ENCODE measurements at regions of chr2 and their contacts with region 1.

Region 1: GRCh38 chr2:38581193-38582147 is 21.3 kb downstream of the HNRNPLL start:
- DNase-seq: peak; percentile 77
- ATAC-seq: peak; percentile 56
- H3K4me3 ChIP-seq: no peak overlapping the region
- H3K4me3 Mint-ChIP-seq: no peak overlapping the region
- H3K27ac ChIP-seq: no peak overlapping the region
- H3K27ac Mint-ChIP-seq: no peak overlapping the region
- H3K4me1 ChIP-seq: no peaks in the 10 kb centered on the region
- H3K4me1 Mint-ChIP-seq: no peaks in the 10 kb centered on the region
- H3K27me3 ChIP-seq: peaks cover 0 to 5% (median 1%) of the 10 kb centered on the region in 4 experiments
- H3K27me3 Mint-ChIP-seq: peaks cover 16% of the 10 kb centered on the region
- CTCF ChIP-seq: peak; percentile 78

Region 2: GRCh38 chr2:38535744-38536506 is 45.5 kb before region 1 on chr2:
- CTCF ChIA-PET with region 1: interaction called, 16 read pairs
- POLR2A ChIA-PET with region 1: no interaction called
- intact Hi-C with region 1: no loop called
- DNase-seq: peak; percentile 85
- ATAC-seq: peak; percentile 54
- H3K4me3 ChIP-seq: peak overlapping the region in 4 of 5 experiments; percentile 40 to 79 (median 52)
- H3K4me3 Mint-ChIP-seq: peak overlapping the region; percentile 78
- H3K27ac ChIP-seq: no peak overlapping the region
- H3K27ac Mint-ChIP-seq: peak overlapping the region; percentile 37
- H3K4me1 ChIP-seq: peaks cover 28 to 39% of the 10 kb centered on the region in 2 donors
- H3K4me1 Mint-ChIP-seq: peaks cover 34% of the 10 kb centered on the region
- H3K27me3 ChIP-seq: peaks cover 0 to 7% (median 1%) of the 10 kb centered on the region in 4 experiments
- H3K27me3 Mint-ChIP-seq: peaks cover 23% of the 10 kb centered on the region
- CTCF ChIP-seq: peak; percentile 90

Region 3: GRCh38 chr2:38602732-38603401 is 21.4 kb after region 1 on chr2 and contains the start of gene HNRNPLL:
- CTCF ChIA-PET with region 1: interaction called, 13 read pairs
- POLR2A ChIA-PET with region 1: no interaction called
- intact Hi-C with region 1: no loop called
- DNase-seq: peak; percentile 89
- ATAC-seq: peak; percentile 86
- H3K4me3 ChIP-seq: peak within 1 kb of the TSS; percentile 71 to 83 (median 81)
- H3K4me3 Mint-ChIP-seq: peak within 1 kb of the TSS; percentile 93
- H3K27ac ChIP-seq: peak within 1 kb of the TSS in 1 of 2 donors; percentile 38
- H3K27ac Mint-ChIP-seq: peak within 1 kb of the TSS; percentile 86
- H3K4me1 ChIP-seq: peaks cover 13 to 27% of the 10 kb centered on the region in 2 donors
- H3K4me1 Mint-ChIP-seq: peaks cover 22% of the 10 kb centered on the region
- H3K27me3 ChIP-seq: peaks cover 0 to 52% (median 32%) of the 10 kb centered on the region in 4 experiments
- H3K27me3 Mint-ChIP-seq: peaks cover 35% of the 10 kb centered on the region
- CTCF ChIP-seq: no peak
- total RNA-seq, gene HNRNPLL: 5.8 and 6.7 TPM in 2 replicates

Region 4: GRCh38 chr2:38685116-38685735 is 103.8 kb after region 1 on chr2:
- CTCF ChIA-PET with region 1: no interaction called
- POLR2A ChIA-PET with region 1: no interaction called
- intact Hi-C with region 1: no loop called
- DNase-seq: no peak
- ATAC-seq: no peak
- H3K4me3 ChIP-seq: no peak overlapping the region
- H3K4me3 Mint-ChIP-seq: no peak overlapping the region
- H3K27ac ChIP-seq: no peak overlapping the region
- H3K27ac Mint-ChIP-seq: no peak overlapping the region
- H3K4me1 ChIP-seq: no peaks in the 10 kb centered on the region
- H3K4me1 Mint-ChIP-seq: no peaks in the 10 kb centered on the region
- H3K27me3 ChIP-seq: no peaks in the 10 kb centered on the region
- H3K27me3 Mint-ChIP-seq: no peaks in the 10 kb centered on the region
- CTCF ChIP-seq: no peak

Region 5: GRCh38 chr2:38728694-38729093 is 147.2 kb after region 1 on chr2:
- CTCF ChIA-PET with region 1: interaction called, 35 read pairs
- POLR2A ChIA-PET with region 1: no interaction called
- intact Hi-C with region 1: loop called (anchors 1 kb)
- DNase-seq: no peak
- ATAC-seq: no peak
- H3K4me3 ChIP-seq: no peak overlapping the region
- H3K4me3 Mint-ChIP-seq: no peak overlapping the region
- H3K27ac ChIP-seq: no peak overlapping the region
- H3K27ac Mint-ChIP-seq: no peak overlapping the region
- H3K4me1 ChIP-seq: no peaks in the 10 kb centered on the region
- H3K4me1 Mint-ChIP-seq: peaks cover 2% of the 10 kb centered on the region
- H3K27me3 ChIP-seq: no peaks in the 10 kb centered on the region
- H3K27me3 Mint-ChIP-seq: no peaks in the 10 kb centered on the region
- CTCF ChIP-seq: no peak

Region 6: DNA sequence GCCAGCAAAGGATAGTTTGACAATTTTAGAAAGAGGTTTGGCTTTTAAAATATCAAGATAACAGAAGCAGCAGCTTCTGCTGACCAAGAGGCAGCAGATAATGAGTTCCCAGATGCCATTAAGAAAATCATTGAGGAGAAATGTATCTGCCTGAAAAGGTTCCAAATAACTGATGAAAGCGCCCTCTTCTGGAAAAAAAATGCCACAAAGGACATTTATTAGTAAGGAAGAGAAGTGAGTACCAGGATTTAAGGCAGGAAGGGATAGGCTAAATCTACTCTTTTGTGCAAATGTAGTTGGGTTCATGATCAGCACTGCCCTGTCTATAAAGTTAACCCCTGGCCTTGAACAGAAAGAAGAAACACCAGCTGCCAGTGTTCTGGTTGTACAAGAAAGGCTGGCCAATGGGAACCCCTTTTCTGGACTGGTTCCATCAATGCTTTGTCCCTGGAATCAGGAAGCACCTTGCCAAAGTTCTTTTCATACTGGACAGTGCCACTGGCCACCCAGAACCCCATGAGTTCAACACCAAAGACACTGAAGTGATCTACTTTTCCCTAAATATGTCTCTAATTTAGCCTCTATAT is 253.6 kb after region 1 on chr2:
- CTCF ChIA-PET with region 1: interaction called, 8 read pairs
- POLR2A ChIA-PET with region 1: no interaction called
- intact Hi-C with region 1: loop called (anchors 1 kb)
- DNase-seq: peak; percentile 8
- ATAC-seq: no peak
- H3K4me3 ChIP-seq: no peak overlapping the region
- H3K4me3 Mint-ChIP-seq: no peak overlapping the region
- H3K27ac ChIP-seq: peak overlapping the region; percentile 30 to 72
- H3K27ac Mint-ChIP-seq: peak overlapping the region; percentile 94
- H3K4me1 ChIP-seq: peaks cover 44 to 50% of the 10 kb centered on the region in 2 donors
- H3K4me1 Mint-ChIP-seq: peaks cover 39% of the 10 kb centered on the region
- H3K27me3 ChIP-seq: no peaks in the 10 kb centered on the region
- H3K27me3 Mint-ChIP-seq: no peaks in the 10 kb centered on the region
- CTCF ChIP-seq: peak; percentile 19

Region 7: GRCh38 chr2:39227628-39228412 is 646.4 kb after region 1 on chr2:
- CTCF ChIA-PET with region 1: interaction called, 10 read pairs
- POLR2A ChIA-PET with region 1: no interaction called
- intact Hi-C with region 1: loop called (anchors 5 kb)
- DNase-seq: peak; percentile 85
- ATAC-seq: peak; percentile 87
- H3K4me3 ChIP-seq: peak overlapping the region in 1 of 5 experiments; percentile 16
- H3K4me3 Mint-ChIP-seq: peak overlapping the region; percentile 77
- H3K27ac ChIP-seq: no peak overlapping the region
- H3K27ac Mint-ChIP-seq: no peak overlapping the region
- H3K4me1 ChIP-seq: peaks cover 6 to 11% of the 10 kb centered on the region in 2 donors
- H3K4me1 Mint-ChIP-seq: peaks cover 12% of the 10 kb centered on the region
- H3K27me3 ChIP-seq: no peaks in the 10 kb centered on the region
- H3K27me3 Mint-ChIP-seq: no peaks in the 10 kb centered on the region
- CTCF ChIP-seq: peak; percentile 92